Activated B cell treated with CpG ODN at 0.5 μM for 24 hours (primary cell): ENCODE measurements at regions of chr11 and their contacts with region 1.

Region 1: DNA sequence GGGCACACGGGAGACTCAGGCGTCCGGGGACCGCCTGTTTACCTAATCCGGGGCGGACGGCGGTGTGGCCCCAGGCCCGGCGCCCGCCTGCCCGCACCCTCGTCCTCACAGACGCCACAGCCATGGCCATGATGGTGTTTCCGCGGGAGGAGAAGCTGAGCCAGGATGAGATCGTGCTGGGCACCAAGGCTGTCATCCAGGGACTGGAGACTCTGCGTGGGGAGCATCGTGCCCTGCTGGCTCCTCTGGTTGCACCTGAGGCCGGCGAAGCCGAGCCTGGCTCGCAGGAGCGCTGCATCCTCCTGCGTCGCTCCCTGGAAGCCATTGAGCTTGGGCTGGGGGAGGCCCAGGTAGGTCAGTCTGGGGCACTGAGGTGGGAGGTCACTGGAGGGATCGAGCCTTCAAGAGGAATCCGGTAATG is 10.0 kb upstream of the RAB1B start:
- DNase-seq: no peak
- ATAC-seq: no peak
- H3K4me3 Mint-ChIP-seq: peak overlapping the region; percentile 96
- H3K27ac Mint-ChIP-seq: peak overlapping the region; percentile 96
- H3K4me1 Mint-ChIP-seq: peaks cover 23% of the 10 kb centered on the region
- H3K27me3 Mint-ChIP-seq: no peaks in the 10 kb centered on the region
- CTCF ChIP-seq: no peak

Region 2: GRCh38 chr11:66282468-66283386 is 24.2 kb after region 1 on chr11:
- CTCF ChIA-PET with region 1: interaction called, 3 read pairs
- POLR2A ChIA-PET with region 1: interaction called, 3 read pairs
- intact Hi-C with region 1: loop called (anchors 1 kb)
- DNase-seq: peak; percentile 100
- ATAC-seq: peak; percentile 79
- H3K4me3 Mint-ChIP-seq: peak overlapping the region; percentile 32
- H3K27ac Mint-ChIP-seq: peak overlapping the region; percentile 77
- H3K4me1 Mint-ChIP-seq: peaks cover 36% of the 10 kb centered on the region
- H3K27me3 Mint-ChIP-seq: no peaks in the 10 kb centered on the region
- CTCF ChIP-seq: peak; percentile 70

Region 3: DNA sequence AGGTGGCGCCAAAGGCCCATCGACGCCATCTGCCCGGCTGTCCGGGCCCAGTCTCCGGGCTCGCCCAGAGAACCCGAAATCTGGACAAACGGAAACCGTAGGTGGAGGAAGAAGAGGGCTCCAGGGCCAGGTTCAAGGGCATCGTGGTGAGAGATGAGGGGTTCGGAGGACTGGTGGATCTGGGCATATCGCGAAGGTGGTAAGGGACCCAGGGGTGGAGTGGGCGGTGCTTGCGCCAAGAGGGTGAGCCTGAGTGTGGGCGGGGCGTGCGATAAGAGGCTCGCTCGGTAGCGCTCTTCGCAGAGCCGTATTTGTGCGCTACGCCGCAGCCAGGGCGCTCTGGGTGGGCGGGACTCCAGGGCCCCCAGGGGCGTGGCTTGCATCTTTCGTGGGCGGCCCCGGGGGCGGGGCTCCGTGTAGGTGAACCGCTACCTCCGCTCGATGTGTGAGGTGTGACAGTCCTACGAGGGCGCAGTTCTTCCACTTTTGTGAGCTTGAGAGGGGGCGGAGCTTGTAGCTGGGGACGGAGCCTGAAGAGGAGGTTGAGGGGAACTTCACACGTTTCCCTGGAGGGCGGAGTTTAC is 53.6 kb after region 1 on chr11:
- CTCF ChIA-PET with region 1: no interaction called
- POLR2A ChIA-PET with region 1: no interaction called
- intact Hi-C with region 1: no loop called
- DNase-seq: peak; percentile 98
- ATAC-seq: peak; percentile 79
- H3K4me3 Mint-ChIP-seq: peak overlapping the region; percentile 93
- H3K27ac Mint-ChIP-seq: peak overlapping the region; percentile 97
- H3K4me1 Mint-ChIP-seq: peaks cover 30% of the 10 kb centered on the region
- H3K27me3 Mint-ChIP-seq: no peaks in the 10 kb centered on the region
- CTCF ChIP-seq: peak; percentile 95

Region 4: GRCh38 chr11:66438504-66439466 is 180.3 kb after region 1 on chr11 and contains the start of gene MRPL11:
- CTCF ChIA-PET with region 1: no interaction called
- POLR2A ChIA-PET with region 1: no interaction called
- intact Hi-C with region 1: no loop called
- DNase-seq: peak; percentile 78
- ATAC-seq: peak; percentile 98
- H3K4me3 Mint-ChIP-seq: peak within 1 kb of the TSS; percentile 87
- H3K27ac Mint-ChIP-seq: peak within 1 kb of the TSS; percentile 97
- H3K4me1 Mint-ChIP-seq: peaks cover 8% of the 10 kb centered on the region
- H3K27me3 Mint-ChIP-seq: peaks cover 4% of the 10 kb centered on the region
- CTCF ChIP-seq: no peak
- total RNA-seq, gene MRPL11: 62.6 and 74.3 TPM in 2 replicates

Region 5: GRCh38 chr11:66842896-66843775 is 584.7 kb after region 1 on chr11 and contains the start of gene RCE1:
- CTCF ChIA-PET with region 1: no interaction called
- POLR2A ChIA-PET with region 1: no interaction called
- intact Hi-C with region 1: no loop called
- DNase-seq: peak; percentile 93
- ATAC-seq: peak; percentile 91
- H3K4me3 Mint-ChIP-seq: peak within 1 kb of the TSS; percentile 92
- H3K27ac Mint-ChIP-seq: peak within 1 kb of the TSS; percentile 90
- H3K4me1 Mint-ChIP-seq: peaks cover 45% of the 10 kb centered on the region
- H3K27me3 Mint-ChIP-seq: no peaks in the 10 kb centered on the region
- CTCF ChIP-seq: no peak
- total RNA-seq, gene RCE1: 20.1 and 21.4 TPM in 2 replicates